Psoas muscle (tissue), 8 donors: ENCODE measurements at regions of chr14 and their contacts with region 1.

Region 1: DNA sequence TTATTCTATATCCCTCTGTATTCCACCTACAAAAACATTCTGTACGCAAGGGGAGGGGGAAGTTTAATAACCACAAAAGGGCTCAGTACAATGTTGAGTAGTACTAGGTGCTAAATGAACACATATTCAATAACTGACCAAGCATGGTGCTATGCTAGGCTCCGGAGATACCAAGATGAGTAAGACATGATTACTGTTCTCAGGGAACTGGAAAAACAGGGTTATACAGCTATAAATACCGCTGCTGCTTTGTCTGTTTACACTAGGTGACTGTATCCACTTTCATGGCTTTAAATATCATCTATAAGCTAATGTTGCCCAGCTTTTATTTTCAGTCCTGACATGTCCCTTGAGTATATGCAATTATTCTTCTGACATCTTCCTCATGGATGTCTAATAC is 135.8 kb downstream of the INSM2 start:
- DNase-seq: no peak
- ATAC-seq: peak; percentile 69 to 94 (median 84)
- H3K4me3 ChIP-seq: no peak overlapping the region
- H3K27ac ChIP-seq: peak overlapping the region; percentile 47
- H3K4me1 ChIP-seq: no peaks in the 10 kb centered on the region
- H3K27me3 ChIP-seq: no peaks in the 10 kb centered on the region
- CTCF ChIP-seq: no peak

Region 2: DNA sequence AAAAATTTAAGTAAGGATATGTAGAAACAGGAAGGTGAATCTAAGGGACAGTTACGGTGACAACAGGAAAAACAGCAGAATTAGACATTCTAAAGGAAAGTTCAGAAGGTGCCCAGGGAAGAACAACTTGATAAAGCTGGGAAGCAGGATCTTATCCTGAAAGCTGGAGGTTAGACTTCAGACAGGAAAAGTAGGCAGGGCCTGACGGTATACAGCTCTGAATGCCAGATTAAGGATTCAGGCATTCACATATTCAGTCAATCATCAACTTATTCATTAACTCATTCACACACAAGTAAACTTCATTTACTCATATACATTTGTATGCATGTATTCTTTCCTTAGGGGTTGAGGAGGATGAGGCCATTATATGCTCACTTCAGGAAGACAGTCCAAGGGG is 58.0 kb after region 1 on chr14:
- intact Hi-C with region 1: loop called in 1 of 2 experiments (anchors 10 kb)
- DNase-seq: no peak
- ATAC-seq: no peak
- H3K4me3 ChIP-seq: no peak overlapping the region
- H3K27ac ChIP-seq: no peak overlapping the region
- H3K4me1 ChIP-seq: no peaks in the 10 kb centered on the region
- H3K27me3 ChIP-seq: no peaks in the 10 kb centered on the region
- CTCF ChIP-seq: no peak